Gastrocnemius medialis (tissue), 4 donors: ENCODE measurements at regions of chr17 and their contacts with region 1.

Region 1: DNA sequence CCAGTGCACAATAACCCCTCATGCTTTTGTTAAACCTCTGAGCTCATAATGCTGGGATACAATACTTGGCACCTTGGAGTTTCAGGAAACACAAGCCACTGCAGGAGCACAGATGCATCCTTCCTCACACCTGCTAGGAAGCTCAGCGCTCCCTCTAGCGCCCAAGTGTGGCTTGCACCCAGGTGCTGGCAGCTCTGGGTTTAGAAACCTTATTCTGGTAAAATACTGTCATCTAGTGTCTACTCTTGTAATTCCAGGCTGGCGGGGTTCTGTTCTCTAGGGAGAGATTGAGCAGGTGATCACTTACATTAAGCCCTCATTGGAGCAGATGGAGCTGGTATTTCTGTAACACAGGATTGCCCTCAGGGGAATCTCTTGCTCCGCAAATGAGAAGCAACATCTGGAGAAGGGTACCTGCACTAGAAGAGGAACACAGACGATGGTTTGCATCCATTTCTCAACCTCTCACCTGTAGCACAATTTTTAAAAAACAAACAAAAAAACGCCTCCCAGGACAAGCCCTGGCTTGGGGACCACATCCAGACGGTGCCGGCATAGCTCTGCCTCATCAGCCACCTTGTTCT is 1.5 kb downstream of the CCL1 start:
- DNase-seq: peak; percentile 57 to 73
- ATAC-seq: peak; percentile 87 to 91
- H3K4me3 ChIP-seq: no peak overlapping the region
- H3K27ac ChIP-seq: no peak overlapping the region
- H3K4me1 ChIP-seq: no peaks in the 10 kb centered on the region
- H3K27me3 ChIP-seq: no peaks in the 10 kb centered on the region
- CTCF ChIP-seq: peak; percentile 83 to 96 (median 92)
- POLR2A ChIP-seq: no peak

Region 2: DNA sequence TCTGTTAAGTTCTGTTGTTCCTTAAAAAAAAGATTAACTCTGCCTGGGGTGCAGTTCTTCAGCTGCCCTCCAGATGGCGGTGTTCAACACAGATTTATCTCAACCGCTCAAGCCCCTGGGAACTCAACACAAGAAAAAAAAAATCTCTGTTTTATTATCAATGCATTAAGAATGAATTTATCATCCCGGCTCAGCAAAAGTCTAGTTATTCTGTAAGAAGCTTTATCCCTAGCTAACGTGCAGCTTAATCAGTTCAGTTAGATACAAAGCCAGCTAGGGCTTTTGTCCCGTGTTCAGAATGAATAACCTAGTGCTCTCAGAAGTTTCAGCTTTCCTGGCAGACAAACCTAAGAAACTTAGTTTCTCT is 582.4 kb before region 1 on chr17:
- in situ Hi-C with region 1: no loop called
- intact Hi-C with region 1: loop called (anchors 10 kb)
- DNase-seq: peak; percentile 9 to 23
- ATAC-seq: no peak
- H3K4me3 ChIP-seq: no peak overlapping the region
- H3K27ac ChIP-seq: no peak overlapping the region
- H3K4me1 ChIP-seq: no peaks in the 10 kb centered on the region
- H3K27me3 ChIP-seq: no peaks in the 10 kb centered on the region
- CTCF ChIP-seq: peak; percentile 56 to 94 (median 75)
- POLR2A ChIP-seq: no peak

Region 3: DNA sequence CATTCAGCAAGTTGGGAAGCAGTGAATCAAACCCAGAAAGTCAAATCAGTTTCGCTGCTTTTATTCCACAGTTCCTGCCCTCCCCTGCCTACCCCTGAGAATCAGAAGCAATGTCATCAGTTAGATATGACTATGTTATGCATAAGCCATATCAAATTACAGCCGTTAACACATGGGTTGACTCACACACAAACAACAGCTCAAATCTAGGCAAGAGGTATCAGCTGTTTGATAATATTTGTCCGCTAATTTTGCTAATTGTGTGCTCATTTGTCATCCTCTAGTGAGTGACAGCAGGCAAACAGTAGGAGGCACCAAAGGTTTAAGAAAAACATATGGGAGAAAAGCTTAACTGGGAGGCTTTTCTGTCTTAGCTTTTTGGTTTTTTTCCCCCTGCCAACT is 433.8 kb before region 1 on chr17:
- in situ Hi-C with region 1: no loop called
- intact Hi-C with region 1: no loop called
- DNase-seq: no peak
- ATAC-seq: no peak
- H3K4me3 ChIP-seq: no peak overlapping the region
- H3K27ac ChIP-seq: no peak overlapping the region
- H3K4me1 ChIP-seq: no peaks in the 10 kb centered on the region
- H3K27me3 ChIP-seq: no peaks in the 10 kb centered on the region
- CTCF ChIP-seq: peak in 1 of 5 experiments; percentile 31
- POLR2A ChIP-seq: no peak

Region 4: DNA sequence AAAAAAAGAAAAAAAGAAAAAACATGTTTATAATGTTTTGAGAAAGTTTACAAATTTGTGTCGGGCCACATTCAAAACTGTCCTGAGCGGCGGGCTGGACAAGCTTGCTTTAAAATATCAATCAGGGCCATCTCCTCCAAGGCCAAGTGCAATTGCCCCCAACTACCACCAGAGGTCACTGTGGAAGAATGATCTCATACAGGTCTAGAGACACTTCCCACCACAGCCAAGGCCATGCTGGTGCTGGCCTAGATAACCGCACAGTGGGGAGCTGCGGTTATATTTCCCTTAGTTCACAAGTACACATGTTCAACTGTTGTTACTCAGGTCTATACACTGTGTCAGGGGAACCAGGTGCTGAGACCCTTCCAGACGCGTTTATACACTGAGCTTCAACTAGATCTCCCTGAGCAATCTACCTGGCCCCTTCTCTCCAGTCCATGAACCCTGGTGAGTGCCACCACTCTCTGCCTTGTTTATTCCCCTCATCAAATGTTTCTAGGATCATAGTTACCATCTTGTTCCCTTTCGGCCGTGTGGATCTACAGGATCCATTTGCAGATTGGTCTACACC is 190.2 kb before region 1 on chr17:
- in situ Hi-C with region 1: no loop called
- intact Hi-C with region 1: loop called (anchors 1 kb)
- DNase-seq: no peak
- ATAC-seq: peak in 1 of 2 donors; percentile 51
- H3K4me3 ChIP-seq: no peak overlapping the region
- H3K27ac ChIP-seq: no peak overlapping the region
- H3K4me1 ChIP-seq: peaks cover 0 to 11% of the 10 kb centered on the region in 2 donors
- H3K27me3 ChIP-seq: no peaks in the 10 kb centered on the region
- CTCF ChIP-seq: peak; percentile 49 to 75 (median 54)
- POLR2A ChIP-seq: no peak

Region 5: DNA sequence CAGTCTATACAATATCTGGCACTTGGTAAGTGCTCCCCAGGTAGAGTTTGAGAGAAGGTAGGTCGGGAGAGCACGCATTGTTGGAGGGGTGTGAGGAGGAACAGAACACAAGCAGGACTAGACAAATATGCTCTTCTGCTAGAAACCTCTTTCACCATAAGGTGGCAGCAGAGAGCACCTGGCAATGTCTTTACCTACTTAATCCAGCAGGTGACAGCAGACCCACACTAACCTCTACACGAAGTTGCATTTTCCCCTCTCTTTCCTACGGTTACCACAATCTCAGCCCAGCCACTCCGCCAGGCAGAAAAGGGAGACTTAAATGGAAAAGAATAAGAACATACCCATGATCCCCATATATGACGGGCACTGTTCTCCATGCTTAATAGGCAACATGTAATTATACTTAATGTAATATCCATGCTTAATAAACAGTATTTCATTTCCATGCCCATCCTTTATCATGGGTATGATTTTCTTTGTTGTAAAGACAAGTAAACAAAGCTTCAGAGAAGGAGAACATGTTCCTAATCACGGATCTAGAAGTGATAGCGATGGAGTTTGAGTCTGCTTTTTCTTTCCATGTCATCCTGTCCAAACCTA is 161.5 kb before region 1 on chr17:
- in situ Hi-C with region 1: loop called (anchors 5 to 10 kb)
- intact Hi-C with region 1: loop called (anchors 1 kb)
- DNase-seq: peak; percentile 62 to 66
- ATAC-seq: peak; percentile 86 to 93
- H3K4me3 ChIP-seq: no peak overlapping the region
- H3K27ac ChIP-seq: no peak overlapping the region
- H3K4me1 ChIP-seq: peaks cover 4% of the 10 kb centered on the region in 2 donors
- H3K27me3 ChIP-seq: peaks cover 0 to 12% (median 0%) of the 10 kb centered on the region in 3 donors
- CTCF ChIP-seq: peak; percentile 94 to 99 (median 96)
- POLR2A ChIP-seq: no peak

Region 6: GRCh38 chr17:34254651-34255380 is 106.8 kb before region 1 on chr17 and contains the start of gene CCL2:
- in situ Hi-C with region 1: no loop called
- intact Hi-C with region 1: no loop called
- DNase-seq: peak; percentile 53 to 59
- ATAC-seq: peak; percentile 27 to 34
- H3K4me3 ChIP-seq: peak within 1 kb of the TSS; percentile 24 to 48 (median 37)
- H3K27ac ChIP-seq: peak within 1 kb of the TSS; percentile 67 to 83 (median 77)
- H3K4me1 ChIP-seq: peaks cover 34 to 59% of the 10 kb centered on the region in 2 donors
- H3K27me3 ChIP-seq: no peaks in the 10 kb centered on the region
- CTCF ChIP-seq: no peak
- POLR2A ChIP-seq: peak in 1 of 2 donors; percentile 63
- total RNA-seq, gene CCL2: 1.1 to 5.8 (median 4.1) TPM

Region 7: DNA sequence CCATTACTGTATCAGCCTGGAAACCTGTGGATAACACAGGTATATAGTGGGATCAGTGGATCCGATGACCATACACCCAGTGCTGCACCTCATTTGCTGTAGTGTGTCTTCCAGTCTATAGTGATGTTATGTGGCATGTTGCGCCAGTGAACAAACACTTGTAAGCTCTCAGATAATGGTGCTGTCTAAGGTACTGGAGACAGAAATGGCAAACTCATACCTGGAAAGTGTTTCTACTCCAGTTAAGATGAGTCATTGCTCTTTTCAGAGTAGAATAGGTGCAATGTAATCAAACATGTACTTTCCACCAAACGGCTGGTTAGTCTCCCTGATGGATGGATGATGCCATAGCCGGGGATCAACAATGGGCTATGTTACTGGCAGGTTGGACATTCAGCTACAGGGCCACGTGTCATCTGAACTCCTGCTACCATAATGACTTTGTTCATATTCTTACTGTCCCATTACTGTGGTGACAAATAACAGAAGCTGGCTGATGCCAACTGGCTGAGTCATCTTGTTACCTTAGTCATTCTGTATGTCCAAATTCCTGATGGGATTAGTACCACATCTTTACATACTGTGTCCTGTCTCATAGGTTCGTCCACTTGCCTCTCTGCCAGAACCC is 69.7 kb before region 1 on chr17:
- in situ Hi-C with region 1: no loop called
- intact Hi-C with region 1: no loop called
- DNase-seq: no peak
- ATAC-seq: no peak
- H3K4me3 ChIP-seq: no peak overlapping the region
- H3K27ac ChIP-seq: no peak overlapping the region
- H3K4me1 ChIP-seq: no peaks in the 10 kb centered on the region
- H3K27me3 ChIP-seq: no peaks in the 10 kb centered on the region
- CTCF ChIP-seq: no peak
- POLR2A ChIP-seq: no peak

Region 8: DNA sequence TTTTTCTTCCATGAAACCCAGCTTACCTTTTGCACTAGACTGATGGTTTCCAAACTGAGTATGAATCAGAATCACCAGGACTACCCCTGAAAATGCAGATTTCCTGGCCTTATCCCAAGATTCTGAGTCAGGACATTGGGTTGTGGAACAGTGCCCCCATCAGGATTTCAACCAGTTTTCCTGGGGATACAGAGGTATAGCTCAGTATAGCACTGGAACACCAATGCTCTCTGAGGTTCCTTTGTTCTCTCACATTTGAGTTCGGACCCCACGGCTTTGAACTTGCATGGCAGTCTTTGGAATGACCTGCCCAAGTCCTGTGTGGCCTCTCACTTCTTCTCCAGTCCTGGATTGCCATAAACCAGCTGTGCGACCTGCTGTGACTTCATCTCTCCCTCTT is 55.1 kb before region 1 on chr17:
- in situ Hi-C with region 1: no loop called
- intact Hi-C with region 1: loop called (anchors 2 kb)
- DNase-seq: peak in 1 of 2 donors; percentile 9
- ATAC-seq: peak; percentile 58 to 72
- H3K4me3 ChIP-seq: no peak overlapping the region
- H3K27ac ChIP-seq: peak overlapping the region in 1 of 4 donors; percentile 13
- H3K4me1 ChIP-seq: peaks cover 5 to 20% of the 10 kb centered on the region in 2 donors
- H3K27me3 ChIP-seq: no peaks in the 10 kb centered on the region
- CTCF ChIP-seq: peak in 3 of 5 experiments; percentile 26 to 37 (median 36)
- POLR2A ChIP-seq: no peak

Region 9: DNA sequence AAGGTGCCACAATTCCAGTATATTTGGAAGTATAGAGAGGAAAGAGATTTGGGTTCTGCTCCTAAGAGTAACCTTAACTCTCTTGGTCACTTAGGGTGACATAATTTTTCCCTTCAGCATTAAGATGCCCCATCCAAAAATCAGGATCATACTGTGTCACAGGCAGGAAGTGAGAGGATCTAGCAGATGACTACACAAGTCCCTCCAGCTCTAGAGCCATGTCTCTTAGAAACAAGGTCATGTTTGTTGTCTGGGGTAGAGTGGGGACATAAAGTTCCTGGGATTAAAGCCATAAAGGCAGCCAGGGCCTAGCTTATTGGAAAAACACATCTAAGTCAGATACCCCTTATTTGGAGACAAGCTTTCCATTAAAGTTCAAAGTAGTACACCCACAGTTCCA is 39.6 kb before region 1 on chr17:
- in situ Hi-C with region 1: no loop called
- intact Hi-C with region 1: loop called (anchors 5 kb)
- DNase-seq: no peak
- ATAC-seq: peak; percentile 63 to 64
- H3K4me3 ChIP-seq: no peak overlapping the region
- H3K27ac ChIP-seq: peak overlapping the region; percentile 3 to 63 (median 30)
- H3K4me1 ChIP-seq: no peaks in the 10 kb centered on the region
- H3K27me3 ChIP-seq: no peaks in the 10 kb centered on the region
- CTCF ChIP-seq: no peak
- POLR2A ChIP-seq: no peak

Region 10: DNA sequence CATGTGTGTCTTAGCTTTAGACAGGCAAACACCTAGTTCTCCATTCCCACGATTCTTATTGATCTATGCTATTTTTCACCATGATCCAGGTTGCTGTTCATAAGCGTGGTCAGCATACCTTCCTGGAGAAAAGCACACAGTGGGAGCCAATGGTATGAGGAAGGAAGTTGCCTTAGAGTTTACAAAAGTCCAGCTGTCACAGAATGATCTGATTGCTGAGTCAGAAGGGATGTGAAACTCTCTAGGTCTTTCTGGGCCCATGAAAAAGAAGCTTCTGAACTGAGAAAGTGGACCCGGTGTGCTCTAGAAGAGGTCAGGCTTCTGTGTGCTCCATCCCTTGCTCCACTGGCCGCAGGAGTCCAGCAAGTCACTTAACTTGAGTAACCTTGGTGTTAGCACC is 72.5 kb after region 1 on chr17:
- in situ Hi-C with region 1: no loop called
- intact Hi-C with region 1: no loop called
- DNase-seq: no peak
- ATAC-seq: peak in 1 of 2 donors; percentile 27
- H3K4me3 ChIP-seq: no peak overlapping the region
- H3K27ac ChIP-seq: no peak overlapping the region
- H3K4me1 ChIP-seq: no peaks in the 10 kb centered on the region
- H3K27me3 ChIP-seq: no peaks in the 10 kb centered on the region
- CTCF ChIP-seq: no peak
- POLR2A ChIP-seq: no peak